GM12878 (cell line): ENCODE measurements at regions of chr21 and their contacts with region 1.

Region 1: GRCh38 chr21:25428537-25428936 is 178.7 kb downstream of the MRPL39 start:
- DNase-seq: no peak
- ATAC-seq: peak; percentile 71
- H3K4me3 ChIP-seq: no peak overlapping the region
- H3K27ac ChIP-seq: peak overlapping the region; percentile 97
- H3K4me1 ChIP-seq: peaks cover 29% of the 10 kb centered on the region
- H3K27me3 ChIP-seq: no peaks in the 10 kb centered on the region
- CTCF ChIP-seq: no peak
- EP300 ChIP-seq: peak; percentile 34 to 71; a peak in 3 of 4 replicates
- POLR2A ChIP-seq: no peak
- RAD21 ChIP-seq: no peak

Region 2: DNA sequence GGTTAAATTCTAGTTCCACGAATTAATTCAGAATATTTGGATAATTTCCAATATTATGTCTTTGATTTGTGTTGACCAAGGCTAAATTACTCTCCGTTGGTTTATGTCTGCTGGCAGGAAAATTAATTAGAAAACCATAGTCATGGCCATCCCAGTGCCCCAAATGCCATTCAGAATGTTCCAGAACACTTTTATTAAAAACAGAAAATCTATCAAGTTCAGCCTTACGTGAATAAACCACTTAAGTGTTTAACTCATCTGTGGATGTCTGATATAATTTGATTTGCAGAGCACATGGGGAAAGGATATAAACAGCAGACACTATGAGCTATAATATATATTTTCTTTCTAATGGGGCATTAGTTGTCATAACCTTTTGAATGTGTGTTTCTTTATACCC is 302.0 kb before region 1 on chr21:
- CTCF ChIA-PET with region 1: no interaction called
- POLR2A ChIA-PET with region 1: no interaction called
- RAD21 ChIA-PET with region 1: no interaction called
- SMC1A ChIA-PET with region 1: no interaction called
- in situ Hi-C with region 1: no loop called
- intact Hi-C with region 1: no loop called
- DNase-seq: no peak
- ATAC-seq: no peak
- H3K4me3 ChIP-seq: no peak overlapping the region
- H3K27ac ChIP-seq: no peak overlapping the region
- H3K4me1 ChIP-seq: no peaks in the 10 kb centered on the region
- H3K27me3 ChIP-seq: no peaks in the 10 kb centered on the region
- CTCF ChIP-seq: no peak
- EP300 ChIP-seq: no peak
- POLR2A ChIP-seq: no peak
- RAD21 ChIP-seq: no peak

Region 3: GRCh38 chr21:25464275-25464674 is 35.7 kb after region 1 on chr21:
- CTCF ChIA-PET with region 1: interaction called, 4 read pairs
- POLR2A ChIA-PET with region 1: interaction called, 51 read pairs
- RAD21 ChIA-PET with region 1: interaction called, 21 read pairs
- SMC1A ChIA-PET with region 1: interaction called, 14 read pairs
- in situ Hi-C with region 1: no loop called
- intact Hi-C with region 1: no loop called
- DNase-seq: no peak
- ATAC-seq: peak; percentile 76
- H3K4me3 ChIP-seq: peak overlapping the region; percentile 22; the same call in 1 of the 2 replicates
- H3K27ac ChIP-seq: peak overlapping the region; percentile 87
- H3K4me1 ChIP-seq: peaks cover 41% of the 10 kb centered on the region
- H3K27me3 ChIP-seq: no peaks in the 10 kb centered on the region
- CTCF ChIP-seq: no peak
- EP300 ChIP-seq: peak; percentile 69 to 94; a peak in 3 of 4 replicates
- POLR2A ChIP-seq: no peak
- RAD21 ChIP-seq: no peak

Region 4: DNA sequence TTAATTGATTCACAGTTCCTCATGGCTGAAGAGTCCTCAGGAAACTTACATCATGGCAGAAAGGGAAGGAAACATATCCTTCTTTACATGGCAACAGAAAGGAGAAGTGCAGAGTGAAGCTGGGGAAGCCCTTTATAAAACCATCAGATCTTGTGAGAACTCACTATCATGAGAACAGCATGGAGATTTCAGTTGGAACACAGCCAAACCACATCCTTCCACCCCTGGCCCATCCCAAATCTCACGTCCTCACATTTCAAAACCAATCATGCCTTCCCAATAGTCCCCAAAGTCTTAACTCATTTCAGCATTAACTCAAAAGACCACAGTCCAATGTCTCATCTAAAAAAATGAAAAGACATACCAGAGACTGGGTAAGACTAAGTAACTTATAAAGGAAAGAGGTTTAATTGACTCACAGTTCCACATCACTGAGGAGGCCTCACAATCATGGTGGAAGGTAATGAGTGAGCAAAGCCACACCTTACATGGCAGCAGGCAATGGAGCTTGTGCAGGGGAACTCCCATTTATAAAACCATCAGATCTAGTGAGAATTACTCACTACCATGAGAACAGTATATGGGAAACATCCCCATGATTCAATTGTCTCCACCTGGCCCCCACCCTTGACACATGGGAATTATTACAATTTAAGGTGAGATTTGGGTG is 73.6 kb after region 1 on chr21:
- CTCF ChIA-PET with region 1: interaction called, 8 read pairs
- POLR2A ChIA-PET with region 1: interaction called, 4 read pairs
- RAD21 ChIA-PET with region 1: interaction called, 37 read pairs
- SMC1A ChIA-PET with region 1: interaction called, 49 read pairs
- in situ Hi-C with region 1: loop called (anchors 5 kb)
- intact Hi-C with region 1: no loop called
- DNase-seq: peak; percentile 87
- ATAC-seq: peak; percentile 78
- H3K4me3 ChIP-seq: no peak overlapping the region
- H3K27ac ChIP-seq: peak overlapping the region; percentile 83
- H3K4me1 ChIP-seq: peaks cover 31% of the 10 kb centered on the region
- H3K27me3 ChIP-seq: no peaks in the 10 kb centered on the region
- CTCF ChIP-seq: no peak
- EP300 ChIP-seq: peak; percentile 8 to 26; a peak in 2 of 4 replicates
- POLR2A ChIP-seq: no peak
- RAD21 ChIP-seq: peak; percentile 17; the same call in 1 of the 2 replicates

Region 5: GRCh38 chr21:25568246-25568645 is 139.7 kb after region 1 on chr21:
- CTCF ChIA-PET with region 1: interaction called, 163 read pairs
- POLR2A ChIA-PET with region 1: interaction called, 55 read pairs
- RAD21 ChIA-PET with region 1: interaction called, 253 read pairs
- SMC1A ChIA-PET with region 1: interaction called, 426 read pairs
- in situ Hi-C with region 1: no loop called
- intact Hi-C with region 1: no loop called
- DNase-seq: no peak
- ATAC-seq: peak; percentile 12
- H3K4me3 ChIP-seq: peak overlapping the region; percentile 87
- H3K27ac ChIP-seq: peak overlapping the region; percentile 92
- H3K4me1 ChIP-seq: peaks cover 16% of the 10 kb centered on the region; the same call in 1 of the 2 replicates
- H3K27me3 ChIP-seq: no peaks in the 10 kb centered on the region
- CTCF ChIP-seq: no peak
- EP300 ChIP-seq: no peak
- POLR2A ChIP-seq: peak; percentile 88
- RAD21 ChIP-seq: no peak